ENCODE measurements at regions of chrX and their contacts with region 1.

Region 1: DNA sequence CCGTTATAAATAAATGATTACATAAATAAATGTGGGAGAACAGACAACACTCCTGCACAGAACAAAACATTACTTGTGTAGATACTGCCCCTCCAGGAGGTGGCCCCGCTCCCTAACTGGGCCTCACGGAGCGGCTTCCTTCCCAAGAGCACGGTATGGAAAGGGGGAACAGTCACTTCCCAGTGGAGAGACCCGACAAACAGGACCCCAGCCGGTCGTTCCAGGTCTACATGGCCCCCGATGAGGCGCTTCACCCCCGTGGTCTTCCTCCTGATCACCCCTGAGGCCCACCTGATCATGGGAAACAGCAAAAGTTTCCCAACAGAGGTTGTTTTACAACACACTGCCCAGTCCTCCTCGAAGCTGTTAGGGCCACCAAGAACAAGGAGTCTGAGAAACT is 6.6 kb upstream of the SLC6A8 start:
- DNase-seq: peak in 1 of 3 donors; percentile 39
- ATAC-seq: no peak
- H3K4me3 ChIP-seq: no peak overlapping the region
- H3K27ac ChIP-seq: no peak overlapping the region
- H3K4me1 ChIP-seq: no peaks in the 10 kb centered on the region
- H3K27me3 ChIP-seq: no peaks in the 10 kb centered on the region

Region 2: GRCh38 chrX:153560000-153560399 is 121.2 kb before region 1 on chrX:
- intact Hi-C with region 1: no loop called
- DNase-seq: peak in 1 of 3 donors; percentile 32
- ATAC-seq: peak; percentile 29 to 45
- H3K4me3 ChIP-seq: no peak overlapping the region
- H3K27ac ChIP-seq: no peak overlapping the region
- H3K4me1 ChIP-seq: no peaks in the 10 kb centered on the region
- H3K27me3 ChIP-seq: no peaks in the 10 kb centered on the region

Region 3: GRCh38 chrX:153627675-153628111 is 53.5 kb before region 1 on chrX:
- intact Hi-C with region 1: loop called in 1 of 4 experiments (anchors 1 kb)
- DNase-seq: no peak
- ATAC-seq: no peak
- H3K4me3 ChIP-seq: no peak overlapping the region
- H3K27ac ChIP-seq: no peak overlapping the region
- H3K4me1 ChIP-seq: no peaks in the 10 kb centered on the region
- H3K27me3 ChIP-seq: no peaks in the 10 kb centered on the region

Measured in right cardiac atrium (tissue), 5 donors.